ENCODE measurements at regions of chr11 and their contacts with region 1.

Region 1: DNA sequence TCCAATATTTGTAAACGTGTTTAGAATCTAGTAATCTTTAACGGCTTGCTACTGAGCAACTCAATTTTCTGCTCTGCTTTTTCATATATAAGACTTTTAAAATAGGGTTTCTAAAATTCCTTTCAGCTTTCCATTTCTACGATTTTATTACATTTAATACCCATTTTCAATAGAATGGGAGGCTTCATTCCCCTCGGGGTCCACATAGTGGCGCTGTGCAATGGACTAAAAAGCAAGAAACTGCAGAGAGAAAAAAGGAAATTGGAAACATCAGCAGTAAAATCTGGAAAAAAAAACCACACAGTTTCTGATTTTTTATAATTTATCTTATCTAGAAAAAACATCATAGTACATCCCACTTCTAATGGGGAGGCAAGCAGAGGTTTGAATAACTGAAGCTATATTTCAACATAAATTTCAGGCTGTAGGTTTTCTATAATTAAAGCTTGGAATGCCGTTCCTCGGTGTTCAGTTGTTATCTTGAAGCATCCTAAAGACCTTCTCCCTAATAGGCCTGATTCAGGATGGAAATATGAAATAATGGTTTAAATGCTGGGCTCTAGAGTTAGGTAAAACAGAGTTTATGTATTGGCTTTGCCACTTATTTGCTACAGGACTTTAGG is 18.7 kb upstream of the JHY start:
- DNase-seq: peak in 1 of 2 donors; percentile 66
- H3K4me3 ChIP-seq: no peak overlapping the region
- H3K27ac ChIP-seq: no peak overlapping the region
- H3K4me1 ChIP-seq: no peaks in the 10 kb centered on the region
- H3K27me3 ChIP-seq: no peaks in the 10 kb centered on the region
- CTCF ChIP-seq: peak; percentile 50 to 81 (median 79)

Region 2: DNA sequence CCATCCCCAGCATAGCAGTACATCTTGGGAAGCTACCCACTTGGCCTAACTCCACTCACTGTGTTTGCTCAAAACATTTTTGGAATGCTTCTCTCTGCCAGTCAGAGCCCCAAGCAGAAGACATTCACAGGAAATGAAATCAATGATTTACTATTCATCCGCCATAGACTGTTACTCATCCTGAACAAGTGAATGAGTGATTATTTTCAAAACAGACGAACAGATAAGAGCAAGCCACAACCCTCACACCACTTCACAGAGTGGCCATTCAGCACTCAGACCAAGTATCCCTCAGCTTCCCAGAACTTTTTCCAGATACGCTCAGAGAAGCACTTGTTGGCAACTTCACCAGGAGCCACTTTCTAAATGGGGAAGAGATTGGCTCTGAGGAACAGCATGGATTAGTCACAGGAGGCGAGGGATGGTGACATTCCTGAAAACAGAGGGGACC is 221.3 kb before region 1 on chr11:
- intact Hi-C with region 1: no loop called
- DNase-seq: no peak
- H3K4me3 ChIP-seq: no peak overlapping the region
- H3K27ac ChIP-seq: no peak overlapping the region
- H3K4me1 ChIP-seq: no peaks in the 10 kb centered on the region
- H3K27me3 ChIP-seq: no peaks in the 10 kb centered on the region
- CTCF ChIP-seq: no peak

Region 3: GRCh38 chr11:123020968-123021367 is 157.2 kb after region 1 on chr11:
- intact Hi-C with region 1: loop called (anchors 1 kb)
- DNase-seq: no peak
- H3K4me3 ChIP-seq: no peak overlapping the region
- H3K27ac ChIP-seq: no peak overlapping the region
- H3K4me1 ChIP-seq: no peaks in the 10 kb centered on the region
- H3K27me3 ChIP-seq: no peaks in the 10 kb centered on the region
- CTCF ChIP-seq: peak in 1 of 3 experiments; percentile 8

Region 4: DNA sequence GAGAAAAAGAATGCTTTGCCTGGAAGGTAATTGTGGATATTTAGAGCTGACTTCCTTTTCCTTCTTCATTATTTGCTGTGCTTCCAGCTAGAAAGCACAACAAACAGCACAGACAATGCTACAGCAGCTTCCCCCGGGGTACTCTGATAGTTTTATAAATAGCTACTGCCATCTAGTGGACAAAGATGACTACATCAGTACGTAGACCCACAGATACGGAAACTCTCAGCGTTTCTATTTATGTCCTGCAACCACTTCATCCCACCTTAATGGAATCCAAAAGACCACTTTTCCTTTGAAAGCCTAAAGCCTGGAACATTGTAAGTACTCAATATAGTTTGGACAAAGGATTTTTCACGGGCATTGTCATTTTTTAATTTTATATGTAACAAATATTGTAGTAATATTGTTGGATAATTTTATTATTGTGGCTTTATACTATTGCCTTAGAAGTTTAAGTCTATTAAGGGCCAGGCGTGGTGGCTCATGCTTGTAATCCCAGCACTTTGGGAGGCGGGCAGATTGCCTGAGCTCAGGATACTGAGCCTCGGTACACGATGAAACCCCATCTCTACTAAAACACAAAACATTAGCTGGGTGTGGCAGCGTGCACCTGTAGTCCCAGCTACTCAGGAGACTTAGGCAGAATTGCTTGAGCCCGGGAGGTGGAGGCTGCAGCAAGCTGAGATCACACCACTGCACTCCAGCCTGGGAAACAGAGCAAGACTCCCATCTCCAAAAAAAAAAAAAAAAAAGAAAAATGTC is 190.7 kb after region 1 on chr11:
- intact Hi-C with region 1: loop called (anchors 10 kb)
- DNase-seq: no peak
- H3K4me3 ChIP-seq: no peak overlapping the region
- H3K27ac ChIP-seq: no peak overlapping the region
- H3K4me1 ChIP-seq: peaks cover 6 to 36% of the 10 kb centered on the region in 2 donors
- H3K27me3 ChIP-seq: no peaks in the 10 kb centered on the region
- CTCF ChIP-seq: peak in 2 of 3 experiments; percentile 57 to 74

Measured in ascending aorta (tissue), 2 donors.